CD4-positive, alpha-beta T cell (primary cell): ENCODE measurements at regions of chr2 and their contacts with region 1.

Region 1: GRCh38 chr2:202577250-202578183 is 57.3 kb upstream of the FAM117B start:
- DNase-seq: no peak
- ATAC-seq: no peak
- H3K4me3 ChIP-seq: no peak overlapping the region
- H3K4me3 Mint-ChIP-seq: no peak overlapping the region
- H3K27ac ChIP-seq: no peak overlapping the region
- H3K27ac Mint-ChIP-seq: no peak overlapping the region
- H3K4me1 ChIP-seq: no peaks in the 10 kb centered on the region
- H3K4me1 Mint-ChIP-seq: no peaks in the 10 kb centered on the region
- H3K27me3 ChIP-seq: no peaks in the 10 kb centered on the region
- H3K27me3 Mint-ChIP-seq: no peaks in the 10 kb centered on the region
- CTCF ChIP-seq: no peak

Region 2: DNA sequence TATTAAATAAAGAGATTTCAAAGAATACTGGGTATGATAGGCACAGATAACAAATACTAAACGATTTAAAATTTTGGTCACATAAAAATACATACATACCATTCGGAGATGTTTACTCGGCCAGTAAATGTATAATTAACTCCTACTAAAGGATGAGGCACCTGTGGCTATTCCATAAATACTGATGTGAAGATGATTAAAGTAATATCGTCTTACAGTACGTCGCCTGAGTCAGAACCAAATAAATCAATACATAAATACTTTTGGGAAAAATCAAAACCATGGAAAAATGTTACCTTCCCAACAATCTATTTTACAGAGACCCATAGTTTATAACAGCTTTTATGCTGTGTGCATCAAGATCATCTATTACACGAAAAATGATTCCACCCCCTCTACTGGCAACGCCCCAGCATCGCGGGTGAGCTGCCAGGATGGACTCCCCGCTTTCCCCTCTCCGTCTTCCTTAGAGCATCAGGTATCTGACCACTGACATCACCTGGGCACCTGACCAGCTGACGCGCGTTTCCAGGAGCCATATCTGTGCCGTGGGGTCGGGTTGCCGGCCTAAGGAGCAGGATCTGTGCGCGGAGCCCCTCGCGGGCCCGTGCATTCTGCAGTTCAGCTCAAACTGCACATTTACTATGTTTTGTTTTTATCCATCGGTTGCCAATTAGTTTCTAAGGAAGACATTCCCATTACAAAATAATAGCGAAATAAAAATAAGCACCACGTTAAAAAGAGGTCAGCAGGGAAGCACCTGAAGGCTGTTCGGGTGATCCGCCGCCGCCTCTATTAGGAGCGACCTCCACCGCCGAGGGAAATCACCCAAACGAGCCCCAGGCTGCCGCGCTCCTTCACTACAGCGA is 293.1 kb after region 1 on chr2:
- CTCF ChIA-PET with region 1: interaction called, 4 read pairs
- POLR2A ChIA-PET with region 1: no interaction called
- intact Hi-C with region 1: loop called in 1 of 2 experiments (anchors 1 kb)
- DNase-seq: peak; percentile 39 to 75 (median 56)
- ATAC-seq: peak; percentile 81
- H3K4me3 ChIP-seq: peak overlapping the region; percentile 84
- H3K4me3 Mint-ChIP-seq: peak overlapping the region; percentile 95
- H3K27ac ChIP-seq: no peak overlapping the region
- H3K27ac Mint-ChIP-seq: peak overlapping the region; percentile 26
- H3K4me1 ChIP-seq: peaks cover 6% of the 10 kb centered on the region
- H3K4me1 Mint-ChIP-seq: peaks cover 13% of the 10 kb centered on the region
- H3K27me3 ChIP-seq: no peaks in the 10 kb centered on the region
- H3K27me3 Mint-ChIP-seq: no peaks in the 10 kb centered on the region
- CTCF ChIP-seq: peak; percentile 67

Region 3: DNA sequence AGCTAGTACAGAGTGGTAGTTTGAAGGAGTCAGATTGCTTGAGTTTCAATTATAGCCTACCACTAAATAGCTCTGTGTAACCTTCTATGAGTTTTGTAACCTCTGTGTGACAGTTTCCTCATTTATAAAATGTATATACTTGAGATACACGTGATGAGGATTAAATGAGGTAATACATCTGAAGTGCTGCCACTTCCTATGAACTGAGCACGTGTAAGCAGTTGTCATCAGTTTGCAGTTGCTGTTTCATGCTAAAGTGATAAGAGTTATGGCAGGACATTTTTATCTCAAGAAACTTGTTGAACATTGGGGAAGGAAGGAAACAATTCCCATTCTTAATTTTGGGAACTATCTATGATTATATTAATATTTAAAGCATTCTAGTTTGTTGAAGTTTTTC is 373.1 kb after region 1 on chr2:
- CTCF ChIA-PET with region 1: no interaction called
- POLR2A ChIA-PET with region 1: no interaction called
- intact Hi-C with region 1: loop called in 1 of 2 experiments (anchors 5 kb)
- DNase-seq: peak in 3 of 14 experiments; percentile 8 to 31 (median 25)
- ATAC-seq: no peak
- H3K4me3 ChIP-seq: no peak overlapping the region
- H3K4me3 Mint-ChIP-seq: no peak overlapping the region
- H3K27ac ChIP-seq: no peak overlapping the region
- H3K27ac Mint-ChIP-seq: no peak overlapping the region
- H3K4me1 ChIP-seq: no peaks in the 10 kb centered on the region
- H3K4me1 Mint-ChIP-seq: no peaks in the 10 kb centered on the region
- H3K27me3 ChIP-seq: no peaks in the 10 kb centered on the region
- H3K27me3 Mint-ChIP-seq: no peaks in the 10 kb centered on the region
- CTCF ChIP-seq: no peak

Region 4: DNA sequence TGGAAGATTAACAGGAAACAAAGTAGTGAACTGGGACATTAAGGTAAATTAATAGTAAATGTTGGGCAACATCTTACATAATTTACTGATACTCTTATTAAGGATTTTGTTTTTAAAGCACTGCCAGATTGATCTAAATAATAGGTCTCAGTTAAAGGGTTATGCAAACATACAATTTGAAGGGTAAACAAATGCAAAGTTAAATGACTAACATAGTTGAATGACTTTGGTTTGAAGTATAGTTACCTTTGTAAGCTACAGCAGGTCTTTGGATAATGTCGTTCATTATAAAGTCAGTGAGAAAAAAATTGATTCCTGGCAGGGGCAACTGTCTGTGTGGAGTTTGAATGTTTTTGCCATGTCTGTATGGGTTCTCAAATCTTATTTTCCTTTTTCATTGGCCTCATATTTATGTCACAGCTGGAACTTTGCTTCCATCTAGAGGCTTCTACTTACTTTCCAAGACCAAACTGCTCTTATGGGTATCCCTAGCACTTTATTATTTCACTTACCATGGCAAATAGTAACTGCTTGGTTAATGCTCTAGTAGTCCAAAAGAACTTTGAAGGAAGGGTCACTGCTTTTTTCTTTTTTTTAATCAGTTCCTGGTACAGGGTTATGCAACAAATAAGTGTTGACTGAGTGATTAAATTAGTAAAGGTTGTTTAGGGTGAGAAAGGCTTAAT is 544.9 kb after region 1 on chr2:
- CTCF ChIA-PET with region 1: no interaction called
- POLR2A ChIA-PET with region 1: no interaction called
- intact Hi-C with region 1: loop called in 1 of 2 experiments (anchors 10 kb)
- DNase-seq: peak in 2 of 14 experiments; percentile 1 to 10
- ATAC-seq: no peak
- H3K4me3 ChIP-seq: no peak overlapping the region
- H3K4me3 Mint-ChIP-seq: no peak overlapping the region
- H3K27ac ChIP-seq: no peak overlapping the region
- H3K27ac Mint-ChIP-seq: no peak overlapping the region
- H3K4me1 ChIP-seq: no peaks in the 10 kb centered on the region
- H3K4me1 Mint-ChIP-seq: no peaks in the 10 kb centered on the region
- H3K27me3 ChIP-seq: no peaks in the 10 kb centered on the region
- H3K27me3 Mint-ChIP-seq: no peaks in the 10 kb centered on the region
- CTCF ChIP-seq: no peak

Region 5: GRCh38 chr2:203155406-203155805 is 577.9 kb after region 1 on chr2:
- CTCF ChIA-PET with region 1: no interaction called
- POLR2A ChIA-PET with region 1: no interaction called
- intact Hi-C with region 1: loop called in 1 of 2 experiments (anchors 10 kb)
- DNase-seq: peak in 4 of 14 experiments; percentile 4 to 52 (median 27)
- ATAC-seq: no peak
- H3K4me3 ChIP-seq: no peak overlapping the region
- H3K4me3 Mint-ChIP-seq: no peak overlapping the region
- H3K27ac ChIP-seq: no peak overlapping the region
- H3K27ac Mint-ChIP-seq: no peak overlapping the region
- H3K4me1 ChIP-seq: peaks cover 5% of the 10 kb centered on the region
- H3K4me1 Mint-ChIP-seq: peaks cover 13% of the 10 kb centered on the region
- H3K27me3 ChIP-seq: no peaks in the 10 kb centered on the region
- H3K27me3 Mint-ChIP-seq: no peaks in the 10 kb centered on the region
- CTCF ChIP-seq: peak; percentile 14

Region 6: DNA sequence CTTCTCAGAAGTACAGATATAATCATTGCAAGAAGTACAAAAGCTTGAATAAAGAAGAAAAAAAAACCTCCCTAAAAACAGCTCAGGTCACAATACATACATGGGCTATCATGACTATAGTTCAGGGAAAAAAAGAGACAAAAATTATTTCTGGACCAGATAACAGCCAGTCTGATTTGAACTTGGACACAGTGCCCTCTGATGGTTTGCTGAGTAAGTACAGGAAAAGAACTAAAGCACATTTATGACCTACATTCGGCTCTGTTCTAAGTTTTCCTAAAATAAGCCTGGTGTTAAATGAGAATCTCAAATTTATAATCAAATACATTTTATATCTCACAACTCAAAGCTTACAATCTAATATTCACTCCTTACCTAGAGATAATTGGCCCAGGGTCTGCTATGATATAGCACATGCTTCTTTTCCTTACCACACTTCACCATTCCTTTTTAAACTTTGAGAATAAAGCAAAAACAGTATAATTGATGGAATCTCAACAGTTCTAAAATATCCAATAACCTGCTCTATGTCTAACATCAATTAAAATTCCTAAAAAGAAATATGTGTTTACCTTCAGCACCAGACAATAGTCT is 876.4 kb after region 1 on chr2:
- CTCF ChIA-PET with region 1: interaction called, 5 read pairs
- POLR2A ChIA-PET with region 1: no interaction called
- intact Hi-C with region 1: loop called (anchors 1 to 2 kb)
- DNase-seq: peak in 6 of 14 experiments; percentile 11 to 69 (median 46)
- ATAC-seq: peak; percentile 52
- H3K4me3 ChIP-seq: no peak overlapping the region
- H3K4me3 Mint-ChIP-seq: no peak overlapping the region
- H3K27ac ChIP-seq: no peak overlapping the region
- H3K27ac Mint-ChIP-seq: no peak overlapping the region
- H3K4me1 ChIP-seq: no peaks in the 10 kb centered on the region
- H3K4me1 Mint-ChIP-seq: peaks cover 4% of the 10 kb centered on the region
- H3K27me3 ChIP-seq: no peaks in the 10 kb centered on the region
- H3K27me3 Mint-ChIP-seq: no peaks in the 10 kb centered on the region
- CTCF ChIP-seq: peak; percentile 73

Region 7: GRCh38 chr2:203909261-203909967 is 1331.9 kb after region 1 on chr2:
- CTCF ChIA-PET with region 1: no interaction called
- POLR2A ChIA-PET with region 1: no interaction called
- intact Hi-C with region 1: loop called in 1 of 2 experiments (anchors 10 kb)
- DNase-seq: peak in 7 of 14 experiments; percentile 10 to 70 (median 45)
- ATAC-seq: peak; percentile 82
- H3K4me3 ChIP-seq: peak overlapping the region; percentile 39
- H3K4me3 Mint-ChIP-seq: peak overlapping the region; percentile 5
- H3K27ac ChIP-seq: no peak overlapping the region
- H3K27ac Mint-ChIP-seq: peak overlapping the region; percentile 18
- H3K4me1 ChIP-seq: peaks cover 13% of the 10 kb centered on the region
- H3K4me1 Mint-ChIP-seq: peaks cover 19% of the 10 kb centered on the region
- H3K27me3 ChIP-seq: no peaks in the 10 kb centered on the region
- H3K27me3 Mint-ChIP-seq: no peaks in the 10 kb centered on the region
- CTCF ChIP-seq: peak; percentile 87